ENCODE measurements at regions of chr12 and their contacts with region 1.

Region 1: GRCh38 chr12:40107098-40107802 is 1.4 kb upstream of the SLC2A13 start:
- DNase-seq: peak; percentile 81 to 97 (median 92)

Region 2: DNA sequence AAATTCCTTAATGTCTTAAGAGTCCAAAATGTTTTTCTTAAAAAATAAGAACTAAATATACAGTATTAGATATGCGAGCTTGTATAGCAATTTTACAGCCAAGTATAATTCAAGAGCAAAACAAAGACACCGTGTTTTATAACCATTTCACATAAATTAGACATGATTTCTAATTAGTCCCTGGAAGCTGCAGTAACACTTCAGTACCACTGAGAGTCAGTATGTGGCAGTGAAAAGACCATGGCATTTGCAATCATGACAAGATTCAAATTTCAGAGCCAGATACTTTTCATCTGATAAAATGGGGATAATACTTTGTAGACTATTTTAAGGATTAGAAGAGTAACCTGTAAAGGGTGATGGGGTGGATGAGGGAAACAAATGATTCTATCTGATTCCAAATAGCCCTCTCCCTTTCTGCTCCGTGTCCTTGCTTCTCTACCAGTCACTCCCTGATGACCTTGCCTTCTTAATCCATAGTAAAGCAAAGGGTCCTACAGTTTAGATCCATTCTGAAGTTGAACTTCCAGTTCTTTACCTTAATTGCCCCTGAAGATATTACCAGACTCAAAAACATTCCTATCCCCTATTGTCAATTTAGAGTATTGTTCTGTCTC is 342.2 kb before region 1 on chr12:
- intact Hi-C with region 1: loop called (anchors 10 kb)
- DNase-seq: peak in 2 of 42 donors; percentile 20 to 38

Region 3: GRCh38 chr12:40011775-40012129 is 95.5 kb before region 1 on chr12:
- intact Hi-C with region 1: loop called (anchors 2 kb)
- DNase-seq: no peak

Region 4: GRCh38 chr12:40286583-40286982 is 179.3 kb after region 1 on chr12:
- intact Hi-C with region 1: no loop called
- DNase-seq: no peak